A673 (cell line): ENCODE measurements at regions of chr13 and their contacts with region 1.

Region 1: DNA sequence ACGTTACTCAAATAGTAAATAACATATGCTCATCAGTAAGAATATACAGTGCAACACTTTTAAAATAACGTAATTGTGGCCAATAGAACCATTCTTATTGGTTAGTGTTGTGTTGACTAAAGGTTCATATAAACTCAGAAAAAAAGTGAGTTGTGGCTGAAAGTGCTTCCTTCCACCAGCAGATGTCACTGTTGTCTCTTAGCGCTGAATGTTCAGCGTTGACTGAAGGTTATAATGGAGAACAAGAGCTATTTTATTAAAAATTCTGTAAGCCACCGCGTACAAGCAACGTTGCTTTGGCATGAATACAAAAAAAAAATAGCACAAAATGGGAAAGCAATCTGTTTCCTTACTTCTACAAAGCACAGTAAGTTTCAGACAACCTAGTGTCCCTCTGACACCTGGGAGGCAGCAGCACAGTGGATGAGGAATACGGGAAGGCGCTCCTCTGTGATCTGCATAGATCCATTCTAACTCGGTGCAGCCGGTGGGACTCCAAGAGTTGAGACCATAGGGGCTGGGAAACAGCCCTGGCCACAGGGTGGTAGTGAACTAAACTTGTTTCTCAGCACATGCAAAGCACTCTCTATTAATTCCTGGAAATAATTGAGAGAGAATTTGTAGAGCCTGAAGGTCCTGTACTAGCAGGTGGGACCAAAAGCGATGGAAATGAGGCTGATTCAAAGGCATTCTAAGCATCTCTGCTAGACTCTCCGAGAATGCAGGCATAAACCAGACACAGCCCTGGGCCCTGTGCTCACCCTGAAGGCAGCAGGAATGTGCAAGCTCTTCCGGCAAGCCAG is 24.0 kb upstream of the OXGR1 start:
- DNase-seq: peak; percentile 63
- H3K4me3 ChIP-seq: no peak overlapping the region
- H3K27ac ChIP-seq: no peak overlapping the region
- H3K4me1 ChIP-seq: no peaks in the 10 kb centered on the region
- H3K27me3 ChIP-seq: peaks cover 56% of the 10 kb centered on the region
- CTCF ChIP-seq: peak; percentile 86

Region 2: GRCh38 chr13:96744367-96745331 is 273.6 kb before region 1 on chr13:
- CTCF ChIA-PET with region 1: no interaction called
- POLR2A ChIA-PET with region 1: no interaction called
- intact Hi-C with region 1: no loop called
- DNase-seq: no peak
- H3K4me3 ChIP-seq: no peak overlapping the region
- H3K27ac ChIP-seq: no peak overlapping the region
- H3K4me1 ChIP-seq: no peaks in the 10 kb centered on the region
- H3K27me3 ChIP-seq: no peaks in the 10 kb centered on the region
- CTCF ChIP-seq: no peak

Region 3: GRCh38 chr13:97359181-97360057 is 341.2 kb after region 1 on chr13:
- CTCF ChIA-PET with region 1: interaction called, 10 read pairs
- POLR2A ChIA-PET with region 1: no interaction called
- intact Hi-C with region 1: loop called (anchors 2 kb)
- DNase-seq: peak; percentile 83
- H3K4me3 ChIP-seq: no peak overlapping the region
- H3K27ac ChIP-seq: no peak overlapping the region
- H3K4me1 ChIP-seq: no peaks in the 10 kb centered on the region
- H3K27me3 ChIP-seq: no peaks in the 10 kb centered on the region
- CTCF ChIP-seq: peak; percentile 91

Region 4: DNA sequence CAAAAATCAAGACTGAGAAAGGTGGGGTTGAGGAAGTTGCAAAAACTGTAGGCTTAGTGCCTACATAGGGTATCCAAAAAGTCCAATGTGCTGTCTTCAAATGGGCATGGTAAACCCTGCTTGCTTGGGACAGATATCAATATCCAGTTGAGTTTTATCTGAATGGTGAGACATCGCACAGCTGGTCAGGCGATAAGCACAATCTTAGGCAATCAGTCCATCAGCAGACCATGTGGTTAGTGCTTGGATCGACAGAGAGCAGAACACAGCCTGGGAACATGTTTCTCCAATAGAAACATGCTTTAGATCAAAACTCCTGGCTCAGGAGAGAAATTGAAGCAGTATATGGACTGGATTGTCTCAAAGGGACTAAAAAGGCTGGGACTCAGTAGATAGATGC is 784.0 kb after region 1 on chr13:
- CTCF ChIA-PET with region 1: no interaction called
- POLR2A ChIA-PET with region 1: no interaction called
- intact Hi-C with region 1: loop called (anchors 5 kb)
- DNase-seq: no peak
- H3K4me3 ChIP-seq: no peak overlapping the region
- H3K27ac ChIP-seq: no peak overlapping the region
- H3K4me1 ChIP-seq: no peaks in the 10 kb centered on the region
- H3K27me3 ChIP-seq: no peaks in the 10 kb centered on the region
- CTCF ChIP-seq: no peak